Right ventricle myocardium inferior (tissue), 1 donor: ENCODE measurements at regions of chr19 and their contacts with region 1.

Region 1: GRCh38 chr19:8444645-8445487 is at the start of gene HNRNPM:
- DNase-seq: peak; percentile 100
- ATAC-seq: peak; percentile 99
- total RNA-seq, gene HNRNPM: 118 TPM

Region 2: GRCh38 chr19:7829561-7830271 is 615.1 kb before region 1 on chr19 and contains the start of gene EVI5L:
- intact Hi-C with region 1: loop called (anchors 5 kb)
- DNase-seq: peak; percentile 99
- ATAC-seq: peak; percentile 93
- total RNA-seq, gene EVI5L: 21.5 TPM

Region 3: GRCh38 chr19:8389891-8390616 is 54.8 kb before region 1 on chr19 and contains the start of gene RAB11B:
- intact Hi-C with region 1: loop called (anchors 1 kb)
- DNase-seq: peak; percentile 99
- ATAC-seq: peak; percentile 93
- total RNA-seq, gene RAB11B: 144 TPM

Region 4: GRCh38 chr19:8412783-8413628 is 31.9 kb before region 1 on chr19 and contains the start of gene MARCHF2:
- intact Hi-C with region 1: loop called (anchors 1 kb)
- DNase-seq: peak; percentile 98
- ATAC-seq: peak; percentile 100
- total RNA-seq, gene MARCHF2: 110 TPM